Activated CD4-positive, alpha-beta memory T cell treated with anti-CD3 and anti-CD28 coated beads, Interleukin-2, amount 10 ng/mL, durations not matched to agents 7 days and 5 days (primary cell): ENCODE measurements at regions of chrX and their contacts with region 1.

Region 1: DNA sequence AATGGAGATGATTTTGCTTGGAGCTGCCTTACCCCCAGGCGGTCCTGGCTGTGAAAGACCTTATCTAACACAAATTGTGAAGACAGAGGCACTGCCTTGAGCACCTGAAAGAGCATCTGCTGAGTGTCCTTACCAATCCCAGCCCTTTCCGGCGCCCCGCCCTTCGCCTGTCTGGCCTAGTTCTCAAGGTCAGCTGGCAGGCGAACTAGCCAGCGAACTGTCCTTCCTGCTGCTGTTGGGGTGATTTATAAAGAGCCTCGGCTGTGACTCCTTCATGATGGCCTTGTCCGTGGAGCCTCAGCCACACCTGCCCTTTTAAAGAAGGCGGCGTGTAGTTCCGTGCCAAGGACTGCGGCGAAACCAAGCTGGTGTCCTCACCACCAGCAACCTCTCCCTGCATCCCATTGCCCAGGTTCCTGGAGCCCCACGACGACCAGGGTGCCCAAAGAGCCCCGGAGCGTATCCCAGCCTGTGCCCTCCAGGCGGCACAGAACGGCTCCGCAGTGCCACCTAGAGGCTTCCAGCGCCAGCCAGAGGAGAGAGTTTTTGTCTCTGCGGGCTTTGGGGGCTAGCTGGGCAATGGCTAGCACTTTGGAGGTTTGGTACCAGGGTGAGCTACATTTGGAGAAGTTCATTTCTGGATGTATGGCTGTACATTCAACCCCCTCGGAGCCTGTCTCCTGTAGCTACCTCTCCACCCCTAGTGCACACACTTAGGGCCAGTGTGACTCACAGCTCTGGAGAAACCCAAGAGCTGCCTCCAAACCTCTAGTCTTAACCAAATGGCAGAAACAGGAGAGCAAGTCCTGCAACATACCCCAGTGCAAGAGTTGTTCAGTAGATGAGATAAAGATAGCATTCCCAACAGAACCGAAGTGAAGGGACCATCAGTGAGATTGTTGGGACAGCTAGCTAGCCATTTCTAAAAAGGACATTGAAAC is 36.8 kb upstream of the VMA21 start:
- DNase-seq: peak; percentile 34
- H3K4me3 Mint-ChIP-seq: no peak overlapping the region
- H3K27ac Mint-ChIP-seq: no peak overlapping the region
- H3K4me1 Mint-ChIP-seq: no peaks in the 10 kb centered on the region
- H3K27me3 Mint-ChIP-seq: peaks cover 8% of the 10 kb centered on the region

Region 2: DNA sequence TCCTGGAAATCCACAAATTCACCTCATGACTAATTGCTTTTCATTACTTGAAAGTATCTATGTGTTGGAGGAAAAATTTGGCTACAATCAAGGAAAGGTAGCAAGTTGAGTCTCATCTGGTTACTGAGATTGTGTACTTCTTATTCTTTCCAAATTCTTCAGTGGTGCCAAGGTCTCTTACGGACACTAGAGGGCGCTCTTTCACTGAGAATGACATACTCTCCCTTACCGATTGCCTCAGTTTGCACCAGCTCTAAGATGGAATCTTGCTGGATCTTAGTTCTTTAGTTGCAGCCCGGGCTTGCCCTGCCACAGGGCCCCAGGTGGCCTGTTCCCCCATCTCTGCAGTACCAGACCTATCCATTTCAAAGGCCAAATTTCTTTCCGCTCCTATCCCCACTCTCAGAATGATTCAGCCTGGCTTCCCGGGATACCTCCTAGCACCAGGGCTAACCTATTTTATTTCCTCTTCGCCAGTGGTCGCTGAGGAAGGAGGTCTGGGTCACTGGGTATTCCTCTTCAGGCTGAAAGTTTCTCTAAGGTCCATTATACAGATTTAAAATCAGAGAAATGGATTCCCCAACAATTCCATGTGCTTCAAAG is 208.4 kb before region 1 on chrX:
- CTCF ChIA-PET with region 1: interaction called, 12 read pairs
- POLR2A ChIA-PET with region 1: no interaction called
- DNase-seq: peak; percentile 19
- H3K4me3 Mint-ChIP-seq: no peak overlapping the region
- H3K27ac Mint-ChIP-seq: no peak overlapping the region
- H3K4me1 Mint-ChIP-seq: no peaks in the 10 kb centered on the region
- H3K27me3 Mint-ChIP-seq: peaks cover 22% of the 10 kb centered on the region

Region 3: DNA sequence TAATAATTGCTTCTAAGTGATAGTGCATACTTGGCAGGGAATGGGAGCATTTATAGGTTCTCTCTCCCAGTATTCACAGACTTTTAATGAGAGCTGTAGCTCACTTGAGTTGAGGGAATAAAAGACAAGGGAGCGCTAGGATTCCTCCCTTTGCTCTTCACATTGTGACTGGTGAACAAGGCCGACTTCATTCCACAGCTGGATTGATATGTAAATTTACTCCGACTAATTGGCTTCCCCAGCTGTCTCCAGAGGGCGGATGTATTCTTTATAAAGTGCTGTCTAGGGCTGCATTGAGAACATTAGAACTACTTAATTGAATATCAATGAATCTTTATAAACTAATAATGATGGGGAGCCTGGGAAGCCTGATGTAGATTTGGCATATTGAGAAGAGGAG is 120.4 kb before region 1 on chrX:
- CTCF ChIA-PET with region 1: no interaction called
- POLR2A ChIA-PET with region 1: no interaction called
- DNase-seq: no peak
- H3K4me3 Mint-ChIP-seq: no peak overlapping the region
- H3K27ac Mint-ChIP-seq: no peak overlapping the region
- H3K4me1 Mint-ChIP-seq: no peaks in the 10 kb centered on the region
- H3K27me3 Mint-ChIP-seq: no peaks in the 10 kb centered on the region

Region 4: DNA sequence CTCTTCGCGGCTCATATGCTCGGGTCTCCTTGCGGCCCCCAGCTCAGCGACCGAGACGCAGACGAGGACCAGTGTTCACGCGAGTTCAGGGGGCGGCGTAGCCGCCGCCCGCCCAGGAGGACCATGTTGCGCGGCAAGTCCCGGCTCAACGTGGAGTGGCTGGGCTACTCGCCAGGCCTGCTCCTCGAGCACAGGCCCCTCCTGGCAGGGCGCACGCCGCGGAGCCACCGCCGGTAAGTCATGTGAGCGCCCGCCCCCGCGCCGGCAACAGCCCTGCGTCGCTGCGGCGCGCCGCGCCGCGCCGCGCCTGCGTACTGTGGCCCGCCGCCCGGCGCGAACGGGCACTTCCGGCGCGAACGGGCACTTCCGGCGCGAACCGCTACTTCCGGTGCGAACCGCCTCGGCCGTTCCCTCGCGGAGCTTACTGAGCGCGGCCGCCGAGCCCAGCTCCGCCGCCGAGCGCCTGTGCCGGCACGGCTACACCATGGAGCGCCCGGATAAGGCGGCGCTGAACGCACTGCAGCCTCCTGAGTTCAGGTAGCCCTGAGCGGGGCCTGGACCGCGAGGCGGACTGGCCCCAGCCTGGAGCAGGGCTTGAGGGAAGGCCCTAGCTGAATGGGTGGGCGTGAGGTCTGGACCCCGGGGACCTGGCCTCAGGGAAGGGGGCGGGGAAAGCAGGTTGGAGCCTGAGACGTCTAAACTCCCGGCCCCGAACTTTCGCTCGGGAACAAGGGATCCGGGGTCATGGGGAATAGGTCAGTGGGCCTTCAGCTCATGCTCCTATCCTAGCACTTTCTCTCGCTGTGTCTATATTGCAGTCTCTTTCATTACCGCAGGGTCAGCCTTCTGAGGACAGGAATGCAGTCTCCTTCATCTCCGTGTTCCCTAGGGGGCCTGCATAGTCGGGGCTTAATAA is 36.9 kb after region 1 on chrX and contains the start of gene VMA21:
- CTCF ChIA-PET with region 1: interaction called, 10 read pairs
- POLR2A ChIA-PET with region 1: interaction called, 3 read pairs
- DNase-seq: peak; percentile 84
- H3K4me3 Mint-ChIP-seq: peak within 1 kb of the TSS; percentile 92
- H3K27ac Mint-ChIP-seq: peak within 1 kb of the TSS; percentile 92
- H3K4me1 Mint-ChIP-seq: peaks cover 66% of the 10 kb centered on the region
- H3K27me3 Mint-ChIP-seq: no peaks in the 10 kb centered on the region
- total RNA-seq, gene VMA21: 39.8 to 40.3 TPM

Region 5: DNA sequence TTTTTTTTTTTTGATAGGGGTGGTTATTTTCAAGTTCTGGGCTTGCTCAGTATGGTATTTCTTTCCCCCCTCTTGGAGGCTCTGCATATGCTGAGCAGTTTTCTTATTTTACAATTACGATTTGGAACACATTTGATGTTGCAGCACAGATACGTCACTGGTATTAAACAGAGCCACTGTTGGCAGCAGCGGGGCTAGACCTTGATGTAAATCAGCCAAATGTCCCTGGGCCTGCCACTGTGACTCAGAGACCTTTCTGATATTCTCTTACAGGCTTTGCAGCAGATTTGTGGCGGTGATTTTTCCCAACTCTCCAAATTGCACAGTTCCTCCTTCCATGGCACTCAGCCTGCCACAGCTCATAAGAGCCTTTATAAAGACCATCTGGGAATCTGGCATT is 117.9 kb after region 1 on chrX:
- CTCF ChIA-PET with region 1: no interaction called
- POLR2A ChIA-PET with region 1: no interaction called
- DNase-seq: no peak
- H3K4me3 Mint-ChIP-seq: no peak overlapping the region
- H3K27ac Mint-ChIP-seq: no peak overlapping the region
- H3K4me1 Mint-ChIP-seq: no peaks in the 10 kb centered on the region
- H3K27me3 Mint-ChIP-seq: peaks cover 2% of the 10 kb centered on the region